ENCODE measurements at regions of chr11 and their contacts with region 1.

Region 1: DNA sequence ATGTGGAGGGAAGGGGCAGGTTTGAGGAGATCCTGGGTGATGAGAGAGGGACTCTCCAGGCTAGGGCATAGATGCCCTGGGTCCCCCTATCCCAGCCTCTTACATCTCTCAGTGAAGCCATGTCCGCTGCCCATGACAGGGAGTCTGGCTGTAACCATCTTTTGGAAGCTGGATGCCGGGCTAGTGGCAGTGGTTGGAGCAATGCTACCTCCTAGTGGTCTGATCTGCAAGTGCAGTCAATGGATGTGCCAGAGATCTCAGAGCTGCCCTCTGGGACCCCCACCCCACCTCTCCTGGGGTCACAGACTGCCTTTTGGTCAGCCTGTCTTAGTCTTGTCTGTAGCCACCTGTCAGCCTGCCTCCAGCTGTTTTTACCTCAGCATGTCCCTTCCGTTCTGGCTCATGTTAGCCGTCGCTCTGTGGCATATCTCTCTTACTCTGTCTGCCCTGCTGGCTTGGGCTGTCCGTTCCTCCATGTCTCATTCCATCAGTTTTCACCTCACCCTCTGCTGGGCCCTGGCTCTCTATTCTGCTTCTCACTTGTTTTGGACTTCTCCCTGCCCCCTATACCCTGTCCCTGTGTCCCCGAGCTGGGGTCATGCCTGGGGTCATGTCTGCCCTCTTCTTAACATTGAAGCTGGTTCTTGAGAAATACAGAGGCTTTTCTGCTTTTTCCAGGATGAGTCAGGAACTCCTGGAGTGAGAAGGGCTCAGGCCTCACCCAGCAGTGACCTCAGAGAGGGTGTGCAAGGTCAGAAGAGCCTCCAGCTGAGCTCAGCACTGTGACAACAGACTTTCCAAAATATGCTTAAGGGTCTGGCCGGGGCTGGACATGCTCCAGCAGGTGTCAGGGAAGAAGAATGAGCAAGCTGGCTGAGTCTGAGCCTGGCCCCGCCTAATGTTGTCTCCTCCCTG is 52.0 kb upstream of the THY1 start:
- DNase-seq: peak in 2 of 3 donors; percentile 56 to 70
- ATAC-seq: peak; percentile 35 to 73
- H3K4me3 ChIP-seq: no peak overlapping the region
- H3K27ac ChIP-seq: no peak overlapping the region
- H3K4me1 ChIP-seq: no peaks in the 10 kb centered on the region
- H3K27me3 ChIP-seq: no peaks in the 10 kb centered on the region

Region 2: DNA sequence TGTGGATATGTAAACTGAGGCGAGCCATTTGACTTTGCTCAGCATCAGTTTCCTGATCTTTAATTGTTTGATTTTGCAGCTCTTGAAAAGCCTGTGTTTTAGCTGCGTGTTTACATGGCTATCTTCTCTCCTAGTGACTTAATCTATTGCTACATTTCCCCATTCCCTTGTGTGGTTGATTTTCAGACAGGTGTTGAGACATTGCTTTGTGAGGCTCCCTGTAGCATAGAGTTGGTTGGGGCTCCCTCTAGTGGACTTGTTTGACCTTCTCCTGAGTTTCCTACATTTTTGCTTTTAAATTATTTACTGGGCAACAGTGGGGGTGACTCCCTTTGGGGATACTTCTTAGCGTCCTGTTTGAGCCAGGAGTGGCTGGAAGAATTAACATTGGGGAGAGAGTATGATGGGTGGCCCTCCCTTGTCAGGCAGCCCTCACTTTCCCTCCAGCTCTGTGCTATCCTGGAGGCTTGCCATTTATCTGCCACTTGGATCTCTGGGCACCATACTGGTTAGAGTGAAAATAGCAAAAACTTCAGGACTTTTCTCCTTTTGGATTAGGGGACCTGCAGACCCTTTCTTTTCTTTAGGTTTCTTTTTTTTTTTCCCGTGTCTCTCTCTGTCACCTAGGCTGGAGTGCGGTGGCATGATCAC is 278.0 kb before region 1 on chr11:
- intact Hi-C with region 1: loop called in 1 of 4 experiments (anchors 10 kb)
- DNase-seq: no peak
- ATAC-seq: peak; percentile 82 to 87
- H3K4me3 ChIP-seq: no peak overlapping the region
- H3K27ac ChIP-seq: no peak overlapping the region
- H3K4me1 ChIP-seq: no peaks in the 10 kb centered on the region
- H3K27me3 ChIP-seq: no peaks in the 10 kb centered on the region

Region 3: DNA sequence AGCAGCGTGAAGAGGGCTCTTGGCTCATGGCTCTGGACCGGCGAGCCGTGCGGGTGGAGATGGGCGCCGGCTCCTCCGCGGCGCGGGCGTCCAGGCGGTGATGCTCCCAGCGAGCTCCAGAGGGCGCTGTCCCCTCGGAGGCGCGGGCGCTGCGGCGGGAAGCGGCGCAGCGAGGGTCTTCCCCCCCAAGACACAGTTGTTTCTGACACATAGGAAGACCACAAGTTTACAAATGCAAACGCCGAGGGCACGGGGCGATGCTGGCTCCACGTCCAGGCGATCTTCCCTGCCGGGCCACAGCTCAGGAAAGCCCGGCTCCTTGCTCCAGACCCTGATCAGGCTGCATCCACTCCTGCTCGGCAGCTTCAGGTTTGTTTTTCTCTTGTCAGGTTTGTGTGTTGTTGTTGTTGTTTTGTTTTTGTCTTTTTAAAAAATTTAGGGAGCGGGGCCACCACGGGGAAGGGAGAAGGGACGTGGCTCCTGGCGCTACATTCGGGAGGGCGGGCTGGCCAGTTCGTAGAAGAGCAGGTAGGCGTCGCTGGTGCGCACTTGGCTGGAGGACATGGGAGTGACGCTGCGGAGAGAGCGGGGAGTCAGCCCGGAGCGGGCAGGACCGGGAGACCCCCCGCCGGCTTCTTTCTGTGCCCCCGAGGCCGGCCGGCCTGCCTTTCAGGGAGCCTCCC is 118.4 kb before region 1 on chr11:
- intact Hi-C with region 1: loop called in 2 of 4 experiments (anchors 10 kb)
- DNase-seq: peak; percentile 86 to 93 (median 93)
- ATAC-seq: peak; percentile 78 to 83
- H3K4me3 ChIP-seq: peak overlapping the region; percentile 48
- H3K27ac ChIP-seq: peak overlapping the region; percentile 28
- H3K4me1 ChIP-seq: no peaks in the 10 kb centered on the region
- H3K27me3 ChIP-seq: no peaks in the 10 kb centered on the region

Region 4: DNA sequence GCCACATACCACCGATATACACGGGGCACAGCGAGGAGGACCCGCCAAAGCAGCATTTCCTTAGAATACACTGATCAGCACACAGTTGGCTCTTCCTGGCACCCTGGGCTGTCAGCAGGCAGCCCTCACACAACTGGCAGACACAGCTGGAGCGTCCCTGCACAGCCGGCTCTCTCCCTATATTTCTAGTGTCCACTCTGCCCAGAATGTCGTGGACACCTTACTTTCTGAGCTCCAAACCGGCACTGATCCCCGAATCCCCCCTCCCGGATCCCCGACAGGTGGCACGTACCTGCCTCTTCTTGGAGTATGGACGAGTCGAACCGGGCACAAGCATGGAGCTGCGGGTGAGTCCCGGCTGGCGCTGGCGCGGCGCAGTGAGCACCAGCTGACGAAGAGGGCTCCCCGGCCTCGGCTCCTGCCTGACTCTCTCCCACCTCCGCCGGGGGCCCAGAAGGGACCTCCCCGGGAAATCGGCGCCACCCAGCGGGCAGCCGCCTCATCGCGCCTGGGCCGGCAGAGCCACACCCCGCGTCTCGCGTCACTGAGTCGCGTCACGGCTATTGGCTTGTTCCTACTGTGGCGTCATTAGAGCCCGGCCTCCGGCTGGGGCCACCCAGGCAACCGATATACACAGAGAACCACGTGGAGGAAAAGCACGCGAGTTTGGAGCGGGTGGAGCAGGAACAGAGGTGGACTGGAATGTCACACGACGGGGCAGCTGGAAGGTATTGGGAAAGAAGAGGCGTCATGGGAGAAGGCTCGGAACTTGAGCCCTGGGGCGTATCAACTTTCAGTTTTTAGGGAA is 93.6 kb before region 1 on chr11 and contains the start of gene USP2:
- intact Hi-C with region 1: loop called in 2 of 4 experiments (anchors 10 kb)
- DNase-seq: peak; percentile 97 to 98 (median 98)
- ATAC-seq: peak; percentile 96 to 97
- H3K4me3 ChIP-seq: peak within 1 kb of the TSS; percentile 49
- H3K27ac ChIP-seq: peak within 1 kb of the TSS; percentile 69
- H3K4me1 ChIP-seq: no peaks in the 10 kb centered on the region
- H3K27me3 ChIP-seq: no peaks in the 10 kb centered on the region
- total RNA-seq, gene USP2: 57.3 to 98.4 (median 95.7) TPM

Region 5: GRCh38 chr11:119791701-119792151 is 316.8 kb after region 1 on chr11:
- intact Hi-C with region 1: no loop called
- DNase-seq: no peak
- ATAC-seq: no peak
- H3K4me3 ChIP-seq: no peak overlapping the region
- H3K27ac ChIP-seq: no peak overlapping the region
- H3K4me1 ChIP-seq: no peaks in the 10 kb centered on the region
- H3K27me3 ChIP-seq: no peaks in the 10 kb centered on the region

Measured in right cardiac atrium (tissue), 5 donors.